Activated CD4-positive, alpha-beta T cell treated with anti-CD3 and anti-CD28 coated beads for 36 hours (primary cell): ENCODE measurements at regions of chr3 and their contacts with region 1.

Region 1: GRCh38 chr3:72756900-72757299 is 91.3 kb downstream of the SHQ1 start:
- DNase-seq: peak; percentile 63
- ATAC-seq: peak; percentile 98
- H3K4me3 Mint-ChIP-seq: no peak overlapping the region
- H3K27ac Mint-ChIP-seq: peak overlapping the region; percentile 89
- H3K4me1 Mint-ChIP-seq: peaks cover 66% of the 10 kb centered on the region
- H3K27me3 Mint-ChIP-seq: no peaks in the 10 kb centered on the region

Region 2: GRCh38 chr3:72665701-72666443 is 91.0 kb before region 1 on chr3:
- CTCF ChIA-PET with region 1: no interaction called
- POLR2A ChIA-PET with region 1: no interaction called
- intact Hi-C with region 1: no loop called
- DNase-seq: peak; percentile 76
- ATAC-seq: peak; percentile 81
- H3K4me3 Mint-ChIP-seq: no peak overlapping the region
- H3K27ac Mint-ChIP-seq: no peak overlapping the region
- H3K4me1 Mint-ChIP-seq: peaks cover 3% of the 10 kb centered on the region
- H3K27me3 Mint-ChIP-seq: no peaks in the 10 kb centered on the region

Region 3: GRCh38 chr3:72738752-72739530 is 18.0 kb before region 1 on chr3:
- CTCF ChIA-PET with region 1: interaction called, 6 read pairs
- POLR2A ChIA-PET with region 1: no interaction called
- intact Hi-C with region 1: loop called in 1 of 2 experiments (anchors 2 kb)
- DNase-seq: peak; percentile 86
- ATAC-seq: peak; percentile 97
- H3K4me3 Mint-ChIP-seq: peak overlapping the region; percentile 76
- H3K27ac Mint-ChIP-seq: peak overlapping the region; percentile 86
- H3K4me1 Mint-ChIP-seq: peaks cover 29% of the 10 kb centered on the region
- H3K27me3 Mint-ChIP-seq: no peaks in the 10 kb centered on the region

Region 4: GRCh38 chr3:72797773-72798543 is 41.1 kb after region 1 on chr3:
- CTCF ChIA-PET with region 1: interaction called, 4 read pairs
- POLR2A ChIA-PET with region 1: no interaction called
- intact Hi-C with region 1: loop called in 1 of 2 experiments (anchors 5 kb)
- DNase-seq: no peak
- ATAC-seq: no peak
- H3K4me3 Mint-ChIP-seq: no peak overlapping the region
- H3K27ac Mint-ChIP-seq: no peak overlapping the region
- H3K4me1 Mint-ChIP-seq: peaks cover 33% of the 10 kb centered on the region
- H3K27me3 Mint-ChIP-seq: no peaks in the 10 kb centered on the region